ENCODE measurements at regions of chrX and their contacts with region 1.

Region 1: GRCh38 chrX:103845165-103845653 is 13.2 kb upstream of the RAB9B start:
- DNase-seq: peak; percentile 76
- H3K4me3 ChIP-seq: no peak overlapping the region
- H3K27ac ChIP-seq: peak overlapping the region in 1 of 4 donors; percentile 1
- H3K4me1 ChIP-seq: no peaks in the 10 kb centered on the region
- H3K27me3 ChIP-seq: no peaks in the 10 kb centered on the region
- CTCF ChIP-seq: peak in 3 of 4 experiments; percentile 42 to 50 (median 44)
- EP300 ChIP-seq: no peak
- POLR2A ChIP-seq: no peak

Region 2: DNA sequence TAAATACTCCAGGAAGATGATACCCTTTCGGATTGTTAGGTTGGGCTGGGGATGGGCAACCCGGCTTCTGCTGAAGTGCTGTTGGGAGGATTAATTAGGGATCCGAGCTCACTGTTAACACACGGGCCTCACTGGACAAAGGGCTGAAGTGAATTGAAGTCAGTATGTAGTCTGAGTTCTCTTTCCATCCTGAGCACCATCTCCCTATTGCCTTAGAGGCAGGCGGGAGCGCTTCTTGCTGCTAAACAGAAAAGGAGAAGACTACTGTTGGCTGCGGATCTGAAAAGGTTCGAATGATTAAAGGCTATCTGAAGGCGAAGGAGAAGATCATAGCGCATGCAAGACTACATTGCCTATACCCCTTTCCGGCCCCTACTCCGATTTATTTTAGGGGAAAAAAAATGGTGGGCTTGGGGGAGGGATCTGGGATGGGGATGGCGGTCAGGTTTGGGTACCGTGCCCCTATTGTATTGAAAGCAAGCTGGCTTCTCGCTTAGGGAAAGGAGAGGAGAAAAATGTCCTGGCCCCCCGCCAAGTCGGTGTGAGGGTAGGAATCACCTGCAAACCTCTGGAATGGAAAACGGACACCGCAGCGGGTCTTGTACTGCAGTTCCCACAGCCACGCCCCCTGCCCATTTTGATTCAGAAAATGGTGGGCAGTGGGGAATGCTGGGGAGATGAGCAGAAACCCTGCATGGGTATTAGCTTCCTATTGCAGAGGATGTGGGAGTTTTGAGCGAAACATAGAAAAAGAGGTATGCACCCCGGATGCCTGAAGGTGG is 181.0 kb before region 1 on chrX:
- intact Hi-C with region 1: no loop called
- DNase-seq: no peak
- H3K4me3 ChIP-seq: no peak overlapping the region
- H3K27ac ChIP-seq: no peak overlapping the region
- H3K4me1 ChIP-seq: no peaks in the 10 kb centered on the region
- H3K27me3 ChIP-seq: no peaks in the 10 kb centered on the region
- CTCF ChIP-seq: no peak
- EP300 ChIP-seq: no peak
- POLR2A ChIP-seq: no peak

Region 3: DNA sequence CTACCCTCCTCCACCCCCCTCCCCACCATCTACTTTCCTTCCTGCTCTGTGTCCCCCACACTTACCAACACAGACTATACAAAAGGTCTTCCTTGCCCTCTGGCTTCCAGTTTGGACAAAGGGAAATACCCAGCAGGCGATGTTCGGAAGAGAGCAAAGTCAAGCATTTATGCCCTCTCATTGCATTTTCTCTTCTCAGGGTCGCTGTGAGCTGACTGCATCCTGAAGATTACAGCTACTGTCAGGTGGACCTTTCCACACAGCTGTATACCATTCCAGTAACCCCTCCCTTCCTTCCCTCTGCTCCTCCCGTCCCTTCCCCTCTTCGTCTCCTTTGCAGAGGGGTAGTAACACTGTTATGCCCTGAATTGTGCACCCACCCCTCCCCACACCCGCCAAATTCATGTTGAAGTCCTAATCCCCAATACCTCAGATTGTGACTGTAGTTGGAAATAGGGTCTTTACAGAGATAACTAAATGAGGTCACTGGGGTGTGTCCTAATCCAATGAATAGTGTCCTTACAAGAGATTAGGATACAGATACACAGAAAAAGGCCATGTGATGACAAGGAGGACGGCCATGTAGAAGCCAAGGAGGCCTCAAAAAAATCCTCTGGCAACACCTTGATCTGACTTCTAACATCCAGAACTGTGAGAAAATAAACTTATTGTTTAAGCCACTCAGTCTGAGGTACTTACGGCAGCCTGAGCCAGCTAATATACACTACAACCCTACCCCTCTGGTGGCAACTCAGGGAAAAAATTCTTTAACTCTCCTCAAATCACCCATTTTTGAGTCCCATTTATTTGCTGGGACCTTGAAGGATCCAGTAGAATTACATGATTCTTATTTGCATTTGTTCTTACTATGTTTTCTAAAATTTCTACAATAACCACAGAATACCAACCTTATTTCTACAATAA is 170.4 kb before region 1 on chrX:
- intact Hi-C with region 1: no loop called
- DNase-seq: no peak
- H3K4me3 ChIP-seq: no peak overlapping the region
- H3K27ac ChIP-seq: no peak overlapping the region
- H3K4me1 ChIP-seq: no peaks in the 10 kb centered on the region
- H3K27me3 ChIP-seq: no peaks in the 10 kb centered on the region
- CTCF ChIP-seq: no peak
- EP300 ChIP-seq: no peak
- POLR2A ChIP-seq: no peak

Region 4: DNA sequence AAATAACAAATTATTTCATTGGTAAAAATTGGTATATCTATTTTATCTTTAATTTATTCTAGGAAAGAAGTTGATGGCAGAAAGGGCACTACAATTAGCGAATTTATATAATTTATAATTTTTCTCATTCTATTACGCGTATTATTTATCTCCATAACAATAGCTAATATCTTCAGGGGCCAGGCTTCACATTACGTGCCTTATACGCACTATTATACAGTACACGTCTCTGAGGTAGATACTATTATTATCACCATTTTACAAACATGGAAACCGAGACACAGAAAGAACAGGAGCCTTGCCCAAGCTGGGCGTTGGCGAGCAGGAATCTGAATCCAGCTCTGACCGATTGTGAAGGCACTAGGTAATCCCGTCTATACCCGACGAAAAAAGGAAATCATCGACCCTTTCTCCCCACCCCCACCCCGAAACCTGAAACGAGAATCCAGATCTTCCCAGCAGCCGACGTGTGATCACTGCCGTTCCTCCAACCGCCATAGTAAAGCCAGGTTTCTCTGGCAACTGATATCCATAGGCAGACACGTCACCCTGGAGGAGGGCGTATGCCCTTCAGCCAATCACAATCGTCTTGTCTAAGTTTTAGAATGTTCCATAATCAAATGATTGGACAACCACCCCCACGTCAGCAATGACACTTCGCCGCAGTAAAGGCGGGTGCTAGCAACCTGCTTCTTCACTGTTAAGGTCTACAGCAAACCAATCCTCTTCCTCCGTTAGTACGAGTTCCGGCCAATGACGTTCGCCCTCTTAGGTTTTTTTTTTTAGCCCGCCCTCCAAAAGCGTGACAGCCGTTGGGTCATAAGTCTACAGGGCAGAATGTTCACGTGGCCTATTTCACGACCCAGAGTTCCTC is 158.8 kb before region 1 on chrX and contains the start of gene MORF4L2:
- intact Hi-C with region 1: no loop called
- DNase-seq: peak; percentile 98
- H3K4me3 ChIP-seq: peak within 1 kb of the TSS; percentile 47 to 59 (median 56)
- H3K27ac ChIP-seq: peak within 1 kb of the TSS; percentile 90 to 95 (median 92)
- H3K4me1 ChIP-seq: peaks cover 0 to 30% (median 4%) of the 10 kb centered on the region in 4 donors
- H3K27me3 ChIP-seq: no peaks in the 10 kb centered on the region
- CTCF ChIP-seq: no peak
- EP300 ChIP-seq: no peak
- POLR2A ChIP-seq: peak; percentile 85 to 87
- total RNA-seq, gene MORF4L2: 171 to 255 (median 215) TPM

Region 5: DNA sequence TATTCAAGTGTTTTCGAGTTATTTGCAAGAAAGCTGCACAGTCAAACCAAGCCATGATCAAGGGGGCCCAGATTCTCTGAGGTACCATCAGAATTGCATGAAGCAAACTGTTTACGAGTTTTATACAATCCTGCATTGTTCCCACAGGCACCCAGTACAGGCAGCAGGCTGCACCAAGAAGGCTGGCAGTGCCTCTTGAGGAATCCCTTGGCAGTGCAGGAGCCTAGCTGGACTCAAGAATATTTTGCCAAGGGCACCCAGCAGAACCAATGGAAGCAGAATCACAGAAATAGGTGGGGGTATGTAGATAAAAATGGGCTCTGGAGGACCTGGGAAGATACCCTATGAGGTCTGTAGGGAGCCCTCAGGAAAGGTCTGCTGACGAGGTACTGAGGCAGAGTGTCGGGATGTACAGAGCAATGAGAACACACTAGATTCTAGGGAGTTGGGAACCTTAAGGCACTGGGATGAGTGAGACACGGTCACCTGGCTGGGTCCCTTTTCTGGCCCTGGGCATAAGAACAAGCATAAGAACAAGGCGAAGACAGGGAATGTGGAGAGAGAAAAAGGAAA is 71.1 kb before region 1 on chrX:
- intact Hi-C with region 1: no loop called
- DNase-seq: no peak
- H3K4me3 ChIP-seq: no peak overlapping the region
- H3K27ac ChIP-seq: no peak overlapping the region
- H3K4me1 ChIP-seq: peaks cover 0 to 5% (median 0%) of the 10 kb centered on the region in 4 donors
- H3K27me3 ChIP-seq: no peaks in the 10 kb centered on the region
- CTCF ChIP-seq: peak in 3 of 4 experiments; percentile 14 to 36 (median 25)
- EP300 ChIP-seq: no peak
- POLR2A ChIP-seq: no peak

Region 6: GRCh38 chrX:104136241-104137019 is 291.2 kb after region 1 on chrX:
- intact Hi-C with region 1: loop called (anchors 5 kb)
- DNase-seq: peak; percentile 89
- H3K4me3 ChIP-seq: peak overlapping the region; percentile 9 to 44 (median 42)
- H3K27ac ChIP-seq: peak overlapping the region; percentile 38 to 69 (median 63)
- H3K4me1 ChIP-seq: peaks cover 0 to 11% (median 7%) of the 10 kb centered on the region in 4 donors
- H3K27me3 ChIP-seq: no peaks in the 10 kb centered on the region
- CTCF ChIP-seq: peak; percentile 22 to 57 (median 44)
- EP300 ChIP-seq: no peak
- POLR2A ChIP-seq: no peak

Measured in sigmoid colon (tissue), 7 donors.